ENCODE measurements at regions of chr10 and their contacts with region 1.

Region 1: DNA sequence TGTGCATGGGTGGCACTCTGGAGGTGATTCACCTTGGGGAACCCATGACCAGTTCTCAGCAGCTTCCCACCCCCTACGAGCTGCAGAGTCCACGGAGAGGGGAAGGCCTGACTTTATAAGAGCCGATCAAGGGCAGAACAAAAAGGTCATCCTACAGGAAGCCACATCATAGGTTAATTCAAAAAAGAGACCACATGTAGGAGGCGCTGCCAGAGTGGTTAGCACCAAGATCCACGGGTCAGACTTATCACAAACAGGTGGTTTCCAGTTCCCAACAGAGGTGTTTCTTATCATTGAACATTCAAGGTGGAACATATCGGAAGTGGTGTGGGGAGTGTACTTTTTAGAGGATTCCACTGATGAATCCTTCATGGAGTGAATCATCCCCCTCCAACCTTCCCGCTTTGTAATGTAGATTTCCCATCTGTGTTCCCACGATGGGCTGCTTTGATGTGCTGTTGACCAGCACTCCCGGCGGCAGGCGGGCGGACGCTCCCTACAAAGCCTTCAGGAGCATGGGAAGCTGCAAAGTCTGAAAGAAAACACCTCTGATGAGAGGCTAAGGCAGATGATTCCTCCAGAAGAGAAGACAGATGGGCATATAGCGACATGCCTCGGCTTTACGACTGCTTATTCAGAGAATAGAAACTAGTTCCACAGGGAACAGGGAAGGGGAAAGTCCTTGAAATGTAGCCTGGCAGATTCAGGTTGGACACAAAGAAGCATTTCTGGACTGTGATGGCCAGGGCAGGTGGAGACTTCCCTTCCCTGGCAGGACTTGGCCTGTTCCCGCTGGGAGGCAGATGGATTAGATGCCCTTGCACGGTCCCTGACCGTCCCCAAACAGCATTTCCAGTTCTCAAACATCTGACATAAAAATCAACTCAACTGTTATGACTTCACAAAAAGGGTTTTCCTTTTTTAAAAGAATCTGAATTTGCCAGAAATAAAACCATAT is 66.5 kb downstream of the AFAP1L2 start:
- DNase-seq: no peak
- ATAC-seq: no peak
- H3K4me3 ChIP-seq: no peak overlapping the region
- H3K27ac ChIP-seq: no peak overlapping the region
- H3K4me1 ChIP-seq: peaks cover 0 to 13% (median 7%) of the 10 kb centered on the region in 12 donors
- H3K27me3 ChIP-seq: no peaks in the 10 kb centered on the region
- CTCF ChIP-seq: no peak
- POLR2A ChIP-seq: no peak

Region 2: GRCh38 chr10:114121031-114121430 is 216.8 kb before region 1 on chr10:
- intact Hi-C with region 1: no loop called
- DNase-seq: no peak
- ATAC-seq: no peak
- H3K4me3 ChIP-seq: no peak overlapping the region
- H3K27ac ChIP-seq: no peak overlapping the region
- H3K4me1 ChIP-seq: peaks cover 0 to 5% (median 0%) of the 10 kb centered on the region in 12 donors
- H3K27me3 ChIP-seq: no peaks in the 10 kb centered on the region
- CTCF ChIP-seq: no peak
- POLR2A ChIP-seq: no peak

Region 3: GRCh38 chr10:114181981-114182380 is 155.8 kb before region 1 on chr10:
- intact Hi-C with region 1: no loop called
- DNase-seq: peak; percentile 69 to 87 (median 73)
- ATAC-seq: peak; percentile 84 to 95 (median 90)
- H3K4me3 ChIP-seq: peak overlapping the region in 7 of 12 donors; percentile 2 to 31 (median 20)
- H3K27ac ChIP-seq: peak overlapping the region in 5 of 12 donors; percentile 51 to 62 (median 52)
- H3K4me1 ChIP-seq: peaks cover 0 to 11% (median 0%) of the 10 kb centered on the region in 12 donors
- H3K27me3 ChIP-seq: no peaks in the 10 kb centered on the region
- CTCF ChIP-seq: no peak
- POLR2A ChIP-seq: no peak

Region 4: DNA sequence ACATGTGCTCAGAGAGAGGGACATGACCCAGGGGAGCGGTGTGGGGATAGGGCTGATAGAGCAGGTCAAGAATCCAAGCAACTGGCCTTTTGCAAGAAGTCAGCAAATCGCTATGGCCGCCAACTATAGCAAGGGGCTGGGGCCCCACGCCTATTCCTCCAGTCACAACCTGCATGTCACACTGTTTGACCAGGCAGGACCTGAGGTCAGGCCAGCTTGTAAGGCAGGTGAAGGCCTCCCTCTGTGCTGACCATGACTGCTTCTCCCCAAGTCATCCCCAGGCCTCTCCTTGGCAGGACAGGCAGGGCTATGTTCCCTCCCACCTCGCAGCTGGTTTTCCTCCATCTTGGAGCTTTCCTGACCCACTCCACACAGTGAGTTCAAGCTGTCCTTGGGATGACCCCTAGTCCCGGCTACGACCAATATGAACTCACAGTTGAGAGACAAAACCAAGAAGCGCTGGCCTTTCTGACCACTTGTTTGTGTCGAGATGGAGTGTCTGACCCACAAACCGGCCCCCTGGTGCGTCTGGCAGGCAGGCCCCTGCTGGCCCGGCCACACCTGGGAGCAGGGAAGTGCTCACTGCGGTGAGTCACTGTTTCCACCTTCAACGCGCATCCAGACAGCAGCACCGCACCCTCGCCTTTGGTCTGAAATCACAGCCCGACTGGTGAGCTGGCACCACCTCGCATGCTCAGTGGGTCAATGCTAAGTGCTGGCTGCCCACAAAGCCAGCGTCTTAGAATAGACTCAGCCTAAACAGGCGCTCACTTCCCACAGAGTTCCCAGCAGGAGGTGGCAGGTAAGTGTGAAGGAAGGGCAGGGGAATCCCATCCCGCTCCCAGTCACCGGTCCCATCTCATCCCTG is 17.3 kb before region 1 on chr10:
- intact Hi-C with region 1: no loop called
- DNase-seq: peak in 2 of 5 donors; percentile 49 to 87
- ATAC-seq: peak in 3 of 4 donors; percentile 16 to 76 (median 65)
- H3K4me3 ChIP-seq: no peak overlapping the region
- H3K27ac ChIP-seq: peak overlapping the region in 1 of 12 donors; percentile 62
- H3K4me1 ChIP-seq: peaks cover 0 to 27% (median 2%) of the 10 kb centered on the region in 12 donors
- H3K27me3 ChIP-seq: no peaks in the 10 kb centered on the region
- CTCF ChIP-seq: no peak
- POLR2A ChIP-seq: no peak

Region 5: GRCh38 chr10:114374053-114374791 is 36.4 kb after region 1 on chr10:
- intact Hi-C with region 1: no loop called
- DNase-seq: peak; percentile 54 to 80 (median 72)
- ATAC-seq: peak; percentile 48 to 84 (median 70)
- H3K4me3 ChIP-seq: no peak overlapping the region
- H3K27ac ChIP-seq: peak overlapping the region in 7 of 12 donors; percentile 18 to 71 (median 64)
- H3K4me1 ChIP-seq: peaks cover 0 to 28% (median 5%) of the 10 kb centered on the region in 12 donors
- H3K27me3 ChIP-seq: no peaks in the 10 kb centered on the region
- CTCF ChIP-seq: no peak
- POLR2A ChIP-seq: no peak

Region 6: GRCh38 chr10:114397651-114398145 is 59.9 kb after region 1 on chr10:
- intact Hi-C with region 1: loop called in 3 of 10 experiments (anchors 5 kb)
- DNase-seq: no peak
- ATAC-seq: peak in 3 of 4 donors; percentile 49 to 65 (median 61)
- H3K4me3 ChIP-seq: peak overlapping the region in 6 of 12 donors; percentile 1 to 31 (median 21)
- H3K27ac ChIP-seq: peak overlapping the region in 10 of 12 donors; percentile 1 to 65 (median 31)
- H3K4me1 ChIP-seq: peaks cover 0 to 69% (median 23%) of the 10 kb centered on the region in 12 donors
- H3K27me3 ChIP-seq: peaks cover 0 to 10% (median 2%) of the 10 kb centered on the region in 9 donors
- CTCF ChIP-seq: peak in 1 of 12 donors; percentile 8
- POLR2A ChIP-seq: no peak

Region 7: GRCh38 chr10:114403541-114404161 is 65.9 kb after region 1 on chr10:
- intact Hi-C with region 1: loop called in 3 of 10 experiments (anchors 5 kb)
- DNase-seq: peak in 4 of 5 donors; percentile 55 to 74 (median 58)
- ATAC-seq: peak; percentile 44 to 71 (median 59)
- H3K4me3 ChIP-seq: peak overlapping the region; percentile 52 to 71 (median 61)
- H3K27ac ChIP-seq: peak overlapping the region; percentile 37 to 76 (median 68)
- H3K4me1 ChIP-seq: peaks cover 4 to 66% (median 27%) of the 10 kb centered on the region in 12 donors
- H3K27me3 ChIP-seq: peaks cover 0 to 39% (median 5%) of the 10 kb centered on the region in 9 donors
- CTCF ChIP-seq: peak in 9 of 12 donors; percentile 11 to 50 (median 31)
- POLR2A ChIP-seq: no peak